ENCODE measurements at regions of chr19 and their contacts with region 1.

Region 1: GRCh38 chr19:3336680-3337523 is 29.5 kb upstream of the NFIC start:
- DNase-seq: peak; percentile 98
- H3K4me3 ChIP-seq: no peak overlapping the region
- H3K27ac ChIP-seq: peak overlapping the region; percentile 94 to 98
- H3K4me1 ChIP-seq: peaks cover 30% of the 10 kb centered on the region
- H3K27me3 ChIP-seq: no peaks in the 10 kb centered on the region
- CTCF ChIP-seq: peak in 2 of 4 experiments; percentile 28 to 36
- POLR2A ChIP-seq: peak; percentile 16

Region 2: GRCh38 chr19:3224346-3225168 is 112.3 kb before region 1 on chr19 and contains the start of gene CELF5:
- intact Hi-C with region 1: no loop called
- DNase-seq: peak; percentile 21
- H3K4me3 ChIP-seq: no peak within 1 kb of the TSS
- H3K27ac ChIP-seq: no peak within 1 kb of the TSS
- H3K4me1 ChIP-seq: no peaks in the 10 kb centered on the region
- H3K27me3 ChIP-seq: peaks cover 4% of the 10 kb centered on the region
- CTCF ChIP-seq: peak; percentile 14 to 59 (median 37)
- POLR2A ChIP-seq: no peak
- total RNA-seq, gene CELF5: 0.36 to 0.80 TPM

Region 3: DNA sequence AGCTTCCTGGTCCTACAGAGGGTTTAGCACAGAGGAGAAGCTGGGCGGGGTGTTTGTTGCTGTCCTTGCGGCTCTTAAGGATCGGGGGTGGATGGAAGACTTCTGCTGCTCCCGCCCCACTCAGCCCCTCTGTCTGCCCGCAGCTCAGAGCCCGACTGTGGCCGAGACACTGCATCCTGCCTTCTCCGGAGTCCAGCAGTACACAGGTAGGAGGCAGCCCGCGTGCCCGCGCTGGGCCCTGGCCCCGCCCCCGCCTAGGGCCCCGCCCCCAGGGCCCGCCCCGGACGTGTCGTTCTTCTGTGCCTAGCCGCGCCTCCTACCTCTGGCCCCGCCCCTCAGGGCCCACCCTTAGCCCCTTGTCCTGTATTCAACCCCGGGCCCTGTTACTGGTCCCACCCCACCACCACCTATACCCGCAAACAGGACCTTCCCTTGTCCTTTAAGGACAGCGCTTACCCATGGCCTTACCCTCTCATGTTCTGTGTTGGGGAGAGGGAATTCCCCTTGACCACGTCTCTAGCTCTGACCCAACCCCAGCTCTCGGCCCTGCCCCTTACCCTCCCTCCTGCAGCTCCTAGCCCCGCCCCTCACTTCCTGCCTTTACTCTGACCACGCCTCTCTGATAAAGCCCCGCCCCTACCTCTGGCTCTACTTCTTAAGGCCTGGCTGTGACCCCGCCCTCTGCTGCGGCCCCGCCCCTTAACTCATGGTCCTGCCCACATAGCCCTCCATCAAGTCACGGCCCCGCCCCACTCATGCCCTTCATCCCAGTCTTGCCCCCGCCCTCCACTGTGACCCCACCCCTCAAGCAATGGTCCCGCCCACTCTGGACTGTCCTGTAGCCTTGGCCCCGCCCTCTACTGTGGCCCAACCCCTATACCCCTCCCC is 51.9 kb before region 1 on chr19:
- intact Hi-C with region 1: no loop called
- DNase-seq: peak; percentile 93
- H3K4me3 ChIP-seq: peak overlapping the region; percentile 2 to 25
- H3K27ac ChIP-seq: peak overlapping the region; percentile 57 to 71
- H3K4me1 ChIP-seq: peaks cover 2% of the 10 kb centered on the region
- H3K27me3 ChIP-seq: no peaks in the 10 kb centered on the region
- CTCF ChIP-seq: no peak
- POLR2A ChIP-seq: peak; percentile 49

Region 4: DNA sequence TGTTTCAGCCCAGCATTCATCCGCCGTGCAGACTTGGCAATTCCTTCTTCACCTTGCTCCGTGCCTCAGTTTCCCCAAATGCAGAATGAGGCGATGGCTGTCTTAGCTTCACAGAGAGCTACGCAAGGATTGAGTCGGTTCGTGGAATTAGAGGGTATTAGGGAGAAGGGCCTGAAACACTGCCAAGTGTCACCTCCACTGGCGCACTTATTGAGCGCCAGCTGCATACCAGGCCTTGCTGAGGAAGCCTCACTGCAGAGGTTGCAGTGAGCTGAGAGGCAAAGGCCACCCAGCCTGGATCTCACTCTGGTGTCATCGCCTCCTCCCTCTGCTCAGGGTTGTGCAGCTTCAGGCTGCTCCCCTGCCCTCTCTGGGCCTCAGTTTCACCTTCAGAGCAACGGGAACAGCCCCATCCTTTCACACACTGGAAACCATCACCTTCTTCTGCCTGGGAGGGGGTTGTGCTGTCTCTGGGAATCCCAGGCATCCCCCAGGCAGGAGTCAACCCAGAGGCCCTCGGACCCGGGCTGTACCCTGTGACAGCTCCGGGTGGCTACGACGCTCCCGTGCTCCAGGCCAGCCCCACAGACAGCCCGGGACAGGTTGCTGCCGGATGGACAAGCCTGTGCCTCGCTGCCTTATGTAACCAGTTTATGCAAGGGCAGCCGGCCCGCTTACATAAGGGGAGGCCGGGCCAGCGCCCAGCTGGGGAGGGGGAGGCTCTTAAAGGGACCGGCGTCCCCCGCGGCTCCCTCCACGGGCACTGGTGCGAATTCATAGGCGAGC is 61.4 kb after region 1 on chr19:
- intact Hi-C with region 1: loop called (anchors 2 kb)
- DNase-seq: peak; percentile 83
- H3K4me3 ChIP-seq: peak overlapping the region; percentile 8 to 15
- H3K27ac ChIP-seq: peak overlapping the region; percentile 99 to 100
- H3K4me1 ChIP-seq: peaks cover 22% of the 10 kb centered on the region
- H3K27me3 ChIP-seq: no peaks in the 10 kb centered on the region
- CTCF ChIP-seq: no peak
- POLR2A ChIP-seq: no peak

Region 5: GRCh38 chr19:3429581-3430080 is 92.7 kb after region 1 on chr19:
- intact Hi-C with region 1: loop called (anchors 2 kb)
- DNase-seq: peak; percentile 96
- H3K4me3 ChIP-seq: no peak overlapping the region
- H3K27ac ChIP-seq: peak overlapping the region; percentile 88 to 90
- H3K4me1 ChIP-seq: peaks cover 7% of the 10 kb centered on the region
- H3K27me3 ChIP-seq: no peaks in the 10 kb centered on the region
- CTCF ChIP-seq: peak; percentile 96 to 99 (median 98)
- POLR2A ChIP-seq: peak; percentile 6

Measured in prostate gland (tissue), 2 donors.